Caco-2 (cell line): ENCODE measurements at regions of chr19 and their contacts with region 1.

Region 1: DNA sequence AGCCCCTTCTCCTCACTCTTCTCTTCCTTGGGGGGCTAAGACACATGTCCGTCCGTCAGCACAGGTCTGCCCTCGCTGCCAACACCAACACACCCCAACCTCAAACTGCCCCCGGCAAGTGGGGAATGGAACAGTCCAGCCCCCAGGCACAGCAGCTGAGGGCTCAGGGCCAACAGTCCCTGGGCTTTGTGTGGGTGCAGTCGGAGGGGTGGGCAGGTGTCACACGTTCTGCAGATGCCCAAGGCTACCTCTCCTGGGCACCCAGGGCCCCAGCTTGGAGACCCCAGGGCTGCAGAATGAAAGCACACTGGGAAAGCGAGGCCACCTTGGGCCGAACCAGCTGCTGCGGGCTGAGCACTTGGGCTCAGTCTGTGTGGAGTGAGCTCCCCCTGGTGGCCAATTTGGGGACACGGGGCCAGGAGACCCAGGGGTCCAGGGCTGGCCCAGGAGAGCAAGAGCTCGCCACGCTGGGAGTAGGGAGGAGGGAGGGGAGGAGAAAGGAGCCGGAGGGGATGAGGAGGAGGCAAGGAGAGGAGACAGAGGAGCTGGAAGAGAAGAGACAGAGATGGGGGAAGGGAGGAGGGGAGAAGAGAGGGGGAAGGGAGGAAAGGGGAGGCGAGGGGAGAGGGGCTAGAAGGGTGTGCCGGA is 14.0 kb upstream of the ATP8B3 start:
- DNase-seq: peak; percentile 71 to 85
- H3K4me3 ChIP-seq: no peak overlapping the region
- H3K4me3 Mint-ChIP-seq: no peak overlapping the region
- H3K27ac Mint-ChIP-seq: no peak overlapping the region
- H3K4me1 ChIP-seq: no peaks in the 10 kb centered on the region
- H3K4me1 Mint-ChIP-seq: no peaks in the 10 kb centered on the region
- H3K27me3 ChIP-seq: no peaks in the 10 kb centered on the region
- H3K27me3 Mint-ChIP-seq: no peaks in the 10 kb centered on the region
- CTCF ChIP-seq: peak; percentile 81 to 88

Region 2: DNA sequence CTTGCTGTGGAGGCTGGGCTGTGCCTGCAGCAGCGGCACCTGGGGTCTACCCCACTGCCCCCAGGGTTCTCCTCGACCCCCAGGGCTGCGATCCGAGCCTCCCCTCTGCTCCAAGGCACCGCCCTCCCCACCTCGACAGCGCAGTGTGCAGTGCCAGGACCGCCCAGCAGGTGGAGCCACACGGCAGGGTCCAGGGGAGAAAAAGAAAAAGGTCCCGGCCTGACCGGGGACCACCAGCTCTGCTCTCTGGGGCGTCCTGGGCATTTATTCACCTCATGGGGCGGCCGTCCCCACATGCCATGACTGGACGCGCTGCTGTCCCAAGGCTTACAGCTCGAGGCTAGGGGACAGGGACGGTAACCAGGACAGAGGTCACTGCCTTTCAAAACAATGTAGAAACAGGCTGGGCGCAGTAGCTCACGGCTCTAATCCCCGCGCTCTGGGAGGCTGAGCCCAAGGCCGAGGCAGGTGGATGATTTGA is 11.6 kb after region 1 on chr19:
- CTCF ChIA-PET with region 1: interaction called, 14 read pairs
- POLR2A ChIA-PET with region 1: interaction called, 3 read pairs
- intact Hi-C with region 1: no loop called
- DNase-seq: peak in 1 of 2 experiments; percentile 70
- H3K4me3 ChIP-seq: no peak overlapping the region
- H3K4me3 Mint-ChIP-seq: no peak overlapping the region
- H3K27ac Mint-ChIP-seq: no peak overlapping the region
- H3K4me1 ChIP-seq: no peaks in the 10 kb centered on the region
- H3K4me1 Mint-ChIP-seq: no peaks in the 10 kb centered on the region
- H3K27me3 ChIP-seq: no peaks in the 10 kb centered on the region
- H3K27me3 Mint-ChIP-seq: no peaks in the 10 kb centered on the region
- CTCF ChIP-seq: peak; percentile 82 to 87